ENCODE measurements at regions of chr2 and their contacts with region 1.

Region 1: GRCh38 chr2:10389573-10389972 is 58.6 kb downstream of the ODC1 start:
- DNase-seq: peak; percentile 46
- H3K4me3 ChIP-seq: no peak overlapping the region
- H3K27me3 ChIP-seq: no peaks in the 10 kb centered on the region
- CTCF ChIP-seq: no peak

Region 2: DNA sequence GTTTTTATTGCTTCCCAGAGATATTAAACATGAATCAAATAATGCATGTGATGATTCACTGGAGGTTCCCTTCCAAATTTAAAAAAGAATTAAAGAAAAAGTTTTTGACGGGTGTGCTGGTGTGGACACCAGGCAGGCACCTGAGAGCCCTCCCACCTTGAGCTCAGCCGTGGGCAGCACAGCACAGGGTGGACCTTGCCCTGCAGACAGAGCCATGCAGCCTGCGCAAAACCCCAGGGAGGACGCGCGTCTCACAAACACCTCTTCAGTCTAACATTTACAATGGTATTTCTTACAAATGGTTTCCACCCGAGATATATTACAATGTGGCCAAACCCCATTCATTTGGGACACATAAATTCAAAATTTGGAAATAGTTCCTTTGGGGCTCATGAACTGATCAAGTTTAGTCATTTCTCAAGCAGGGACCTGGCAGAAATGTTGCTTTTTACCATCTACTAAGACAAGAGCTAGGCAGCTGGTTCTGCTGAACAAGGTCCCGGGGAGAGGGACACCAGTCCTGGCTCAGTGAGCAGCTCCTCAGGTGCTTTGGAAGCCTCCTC is 13.2 kb after region 1 on chr2:
- CTCF ChIA-PET with region 1: interaction called, 24 read pairs
- POLR2A ChIA-PET with region 1: interaction called, 12 read pairs
- DNase-seq: no peak
- H3K4me3 ChIP-seq: no peak overlapping the region
- H3K27me3 ChIP-seq: no peaks in the 10 kb centered on the region
- CTCF ChIP-seq: no peak

Region 3: DNA sequence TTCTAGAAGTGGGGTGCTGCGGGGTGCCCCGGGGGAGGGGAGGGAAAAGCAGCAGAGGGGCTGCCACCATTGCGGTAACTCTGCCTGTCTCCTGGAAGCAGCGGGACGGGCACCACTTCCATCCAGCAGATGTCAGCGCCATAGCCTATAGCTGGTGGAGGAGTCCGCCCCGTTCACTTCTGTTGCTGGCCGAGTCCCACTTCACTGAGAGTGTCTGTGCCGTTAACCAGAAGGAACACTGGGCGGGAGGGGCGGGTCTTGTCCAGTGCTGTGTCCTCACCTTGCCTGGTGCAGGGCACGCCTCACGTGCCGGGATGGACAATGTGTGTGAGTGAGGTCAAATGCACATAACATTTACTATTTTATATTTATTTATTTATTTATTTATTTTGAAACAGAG is 77.8 kb after region 1 on chr2:
- CTCF ChIA-PET with region 1: no interaction called
- POLR2A ChIA-PET with region 1: no interaction called
- DNase-seq: no peak
- H3K4me3 ChIP-seq: no peak overlapping the region
- H3K27me3 ChIP-seq: 0 out of 2 replicates have a peak, but pooled peaks cover 2% of the 10 kb centered on the region
- CTCF ChIP-seq: no peak

Region 4: GRCh38 chr2:10873790-10874437 is 484.3 kb after region 1 on chr2:
- CTCF ChIA-PET with region 1: no interaction called
- POLR2A ChIA-PET with region 1: no interaction called
- DNase-seq: no peak
- H3K4me3 ChIP-seq: no peak overlapping the region
- H3K27me3 ChIP-seq: no peaks in the 10 kb centered on the region; the same call in 1 of the 2 replicates
- CTCF ChIP-seq: no peak

Measured in BJ (cell line).